ENCODE measurements at regions of chr17 and their contacts with region 1.

Region 1: DNA sequence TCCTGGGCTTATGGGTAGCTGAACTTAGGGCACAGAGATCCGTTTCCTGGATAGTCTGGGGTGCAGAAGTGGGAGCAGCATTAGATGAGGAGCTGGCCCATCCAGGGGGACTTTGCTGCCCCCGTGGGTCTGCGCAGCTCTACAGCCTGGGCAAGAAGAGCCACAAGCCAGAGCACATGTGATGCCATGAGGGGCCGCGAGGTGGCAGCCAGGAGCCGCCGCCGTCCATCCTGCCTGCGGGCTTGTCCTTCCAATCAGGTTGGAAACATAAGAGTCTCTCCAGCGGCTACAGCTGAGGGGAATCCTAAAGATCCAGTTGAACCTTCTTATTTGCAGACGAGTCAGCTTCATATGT is 21.9 kb downstream of the C1QTNF1 start:
- DNase-seq: peak; percentile 41 to 72 (median 61)
- ATAC-seq: peak; percentile 87
- H3K4me3 ChIP-seq: no peak overlapping the region
- H3K4me3 Mint-ChIP-seq: no peak overlapping the region
- H3K27ac ChIP-seq: no peak overlapping the region
- H3K27ac Mint-ChIP-seq: no peak overlapping the region
- H3K4me1 ChIP-seq: no peaks in the 10 kb centered on the region
- H3K4me1 Mint-ChIP-seq: peaks cover 4% of the 10 kb centered on the region
- H3K27me3 ChIP-seq: peaks cover 0 to 5% of the 10 kb centered on the region in 2 experiments
- H3K27me3 Mint-ChIP-seq: peaks cover 16% of the 10 kb centered on the region
- CTCF ChIP-seq: peak; percentile 74

Region 2: DNA sequence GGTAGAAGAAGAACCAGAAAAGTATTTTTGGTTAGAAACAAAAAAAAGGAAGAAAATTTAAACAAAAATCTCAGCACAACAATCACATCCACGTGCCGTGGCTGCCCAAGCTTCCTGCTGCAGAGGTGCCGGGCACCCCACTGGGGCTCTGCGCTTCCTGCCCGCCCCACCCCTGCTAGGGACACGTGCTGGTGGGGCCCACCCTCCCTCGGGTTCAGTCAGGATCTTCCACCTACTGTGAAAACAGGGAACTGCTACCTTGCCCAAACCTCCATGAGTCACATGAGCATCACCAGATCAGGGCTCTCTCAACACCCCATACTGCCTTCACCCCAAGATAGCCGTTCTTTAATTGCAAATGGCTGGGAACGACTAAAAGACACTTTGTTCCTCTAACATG is 239.4 kb before region 1 on chr17:
- CTCF ChIA-PET with region 1: no interaction called
- POLR2A ChIA-PET with region 1: no interaction called
- intact Hi-C with region 1: no loop called
- DNase-seq: peak in 6 of 9 experiments; percentile 39 to 85 (median 76)
- ATAC-seq: peak; percentile 69
- H3K4me3 ChIP-seq: no peak overlapping the region
- H3K4me3 Mint-ChIP-seq: peak overlapping the region; percentile 57
- H3K27ac ChIP-seq: peak overlapping the region in 1 of 2 experiments; percentile 30
- H3K27ac Mint-ChIP-seq: peak overlapping the region; percentile 85
- H3K4me1 ChIP-seq: peaks cover 34% of the 10 kb centered on the region
- H3K4me1 Mint-ChIP-seq: peaks cover 55% of the 10 kb centered on the region
- H3K27me3 ChIP-seq: no peaks in the 10 kb centered on the region
- H3K27me3 Mint-ChIP-seq: no peaks in the 10 kb centered on the region
- CTCF ChIP-seq: peak; percentile 58

Region 3: GRCh38 chr17:78993241-78993956 is 52.4 kb before region 1 on chr17:
- CTCF ChIA-PET with region 1: interaction called, 5 read pairs
- POLR2A ChIA-PET with region 1: no interaction called
- intact Hi-C with region 1: loop called in 1 of 2 experiments (anchors 2 kb)
- DNase-seq: peak; percentile 12 to 66 (median 59)
- ATAC-seq: peak; percentile 71
- H3K4me3 ChIP-seq: no peak overlapping the region
- H3K4me3 Mint-ChIP-seq: no peak overlapping the region
- H3K27ac ChIP-seq: no peak overlapping the region
- H3K27ac Mint-ChIP-seq: no peak overlapping the region
- H3K4me1 ChIP-seq: no peaks in the 10 kb centered on the region
- H3K4me1 Mint-ChIP-seq: peaks cover 6% of the 10 kb centered on the region
- H3K27me3 ChIP-seq: no peaks in the 10 kb centered on the region
- H3K27me3 Mint-ChIP-seq: no peaks in the 10 kb centered on the region
- CTCF ChIP-seq: peak; percentile 78

Region 4: GRCh38 chr17:79007505-79008381 is 38.1 kb before region 1 on chr17:
- CTCF ChIA-PET with region 1: no interaction called
- POLR2A ChIA-PET with region 1: no interaction called
- intact Hi-C with region 1: no loop called
- DNase-seq: peak in 1 of 9 experiments; percentile 37
- ATAC-seq: no peak
- H3K4me3 ChIP-seq: no peak overlapping the region
- H3K4me3 Mint-ChIP-seq: peak overlapping the region; percentile 86
- H3K27ac ChIP-seq: no peak overlapping the region
- H3K27ac Mint-ChIP-seq: peak overlapping the region; percentile 92
- H3K4me1 ChIP-seq: peaks cover 47% of the 10 kb centered on the region
- H3K4me1 Mint-ChIP-seq: peaks cover 53% of the 10 kb centered on the region
- H3K27me3 ChIP-seq: no peaks in the 10 kb centered on the region
- H3K27me3 Mint-ChIP-seq: no peaks in the 10 kb centered on the region
- CTCF ChIP-seq: no peak

Region 5: GRCh38 chr17:79019632-79020584 is 25.9 kb before region 1 on chr17:
- CTCF ChIA-PET with region 1: interaction called, 51 read pairs
- POLR2A ChIA-PET with region 1: no interaction called
- intact Hi-C with region 1: loop called (anchors 1 kb)
- DNase-seq: peak in 7 of 9 experiments; percentile 18 to 66 (median 59)
- ATAC-seq: peak; percentile 61
- H3K4me3 ChIP-seq: no peak overlapping the region
- H3K4me3 Mint-ChIP-seq: no peak overlapping the region
- H3K27ac ChIP-seq: no peak overlapping the region
- H3K27ac Mint-ChIP-seq: no peak overlapping the region
- H3K4me1 ChIP-seq: peaks cover 7% of the 10 kb centered on the region
- H3K4me1 Mint-ChIP-seq: peaks cover 9% of the 10 kb centered on the region
- H3K27me3 ChIP-seq: peaks cover 0 to 1% of the 10 kb centered on the region in 2 experiments
- H3K27me3 Mint-ChIP-seq: no peaks in the 10 kb centered on the region
- CTCF ChIP-seq: peak; percentile 76

Region 6: GRCh38 chr17:79027925-79028813 is 17.6 kb before region 1 on chr17:
- CTCF ChIA-PET with region 1: interaction called, 51 read pairs
- POLR2A ChIA-PET with region 1: no interaction called
- intact Hi-C with region 1: no loop called
- DNase-seq: no peak
- ATAC-seq: no peak
- H3K4me3 ChIP-seq: no peak overlapping the region
- H3K4me3 Mint-ChIP-seq: no peak overlapping the region
- H3K27ac ChIP-seq: no peak overlapping the region
- H3K27ac Mint-ChIP-seq: no peak overlapping the region
- H3K4me1 ChIP-seq: peaks cover 8% of the 10 kb centered on the region
- H3K4me1 Mint-ChIP-seq: peaks cover 12% of the 10 kb centered on the region
- H3K27me3 ChIP-seq: peaks cover 0 to 3% of the 10 kb centered on the region in 2 experiments
- H3K27me3 Mint-ChIP-seq: peaks cover 30% of the 10 kb centered on the region
- CTCF ChIP-seq: no peak

Region 7: DNA sequence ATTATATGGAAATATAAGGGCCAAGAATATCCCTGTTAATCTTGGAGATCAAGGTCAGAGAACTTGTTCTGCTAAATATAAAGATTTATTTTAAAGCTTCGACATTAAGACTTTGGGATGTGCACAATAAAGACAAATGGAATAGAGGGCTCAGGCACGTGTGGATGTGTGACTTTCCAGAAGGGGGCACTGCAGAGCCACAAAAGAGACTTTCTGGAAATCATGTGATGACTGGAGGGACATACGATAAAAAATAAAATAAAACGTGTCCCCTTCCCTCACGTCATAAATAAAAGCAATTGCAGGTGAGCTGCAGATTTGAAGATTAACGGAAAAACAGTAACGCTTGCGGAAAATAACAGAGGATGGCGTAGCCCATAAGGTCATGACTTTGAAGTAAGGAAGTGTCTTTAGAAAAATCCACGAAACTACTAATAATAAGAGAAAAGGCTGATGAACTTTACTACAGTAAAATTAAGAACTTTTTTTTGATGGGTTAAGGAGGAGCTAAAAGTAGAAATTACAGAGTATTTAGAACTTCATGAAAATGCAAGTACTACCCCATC is 19.4 kb after region 1 on chr17:
- CTCF ChIA-PET with region 1: interaction called, 16 read pairs
- POLR2A ChIA-PET with region 1: no interaction called
- intact Hi-C with region 1: no loop called
- DNase-seq: peak; percentile 22 to 71 (median 57)
- ATAC-seq: peak; percentile 73
- H3K4me3 ChIP-seq: no peak overlapping the region
- H3K4me3 Mint-ChIP-seq: no peak overlapping the region
- H3K27ac ChIP-seq: no peak overlapping the region
- H3K27ac Mint-ChIP-seq: no peak overlapping the region
- H3K4me1 ChIP-seq: peaks cover 3% of the 10 kb centered on the region
- H3K4me1 Mint-ChIP-seq: peaks cover 3% of the 10 kb centered on the region
- H3K27me3 ChIP-seq: no peaks in the 10 kb centered on the region
- H3K27me3 Mint-ChIP-seq: no peaks in the 10 kb centered on the region
- CTCF ChIP-seq: peak; percentile 72

Region 8: GRCh38 chr17:79082311-79083190 is 36.7 kb after region 1 on chr17:
- CTCF ChIA-PET with region 1: interaction called, 30 read pairs
- POLR2A ChIA-PET with region 1: no interaction called
- intact Hi-C with region 1: loop called (anchors 1 to 2 kb)
- DNase-seq: peak in 8 of 9 experiments; percentile 23 to 65 (median 56)
- ATAC-seq: peak; percentile 70
- H3K4me3 ChIP-seq: no peak overlapping the region
- H3K4me3 Mint-ChIP-seq: no peak overlapping the region
- H3K27ac ChIP-seq: no peak overlapping the region
- H3K27ac Mint-ChIP-seq: no peak overlapping the region
- H3K4me1 ChIP-seq: no peaks in the 10 kb centered on the region
- H3K4me1 Mint-ChIP-seq: peaks cover 2% of the 10 kb centered on the region
- H3K27me3 ChIP-seq: no peaks in the 10 kb centered on the region
- H3K27me3 Mint-ChIP-seq: no peaks in the 10 kb centered on the region
- CTCF ChIP-seq: peak; percentile 82

Measured in CD8-positive, alpha-beta T cell (primary cell).